HEK293 (cell line): ENCODE measurements at regions of chr12 and their contacts with region 1.

Region 1: DNA sequence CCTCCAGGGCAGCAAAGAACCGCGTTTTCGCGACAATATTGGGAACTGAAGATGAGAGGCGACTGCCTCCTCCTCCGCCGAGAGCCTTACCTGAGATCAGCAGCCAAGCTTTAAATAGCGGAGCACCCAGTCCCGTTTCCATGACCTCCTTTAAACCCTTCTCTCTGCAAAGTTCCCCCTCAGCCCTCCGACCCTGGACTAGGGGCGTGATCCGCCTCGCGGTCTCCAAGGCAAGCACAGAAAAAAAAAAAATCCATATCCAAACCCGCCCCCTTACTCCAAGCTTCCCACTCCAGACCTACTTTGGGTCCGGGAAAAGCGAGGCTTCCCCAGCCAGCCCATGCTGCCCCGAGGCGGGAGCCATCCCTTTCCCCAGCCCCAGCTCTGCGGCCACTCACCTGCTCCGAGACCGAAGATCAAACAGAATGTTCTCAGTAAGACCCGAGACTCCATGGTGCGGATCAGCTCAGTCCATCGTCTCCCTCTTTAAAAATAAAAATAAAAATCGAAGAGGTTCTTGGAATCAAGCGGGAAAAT is 630 bp downstream of the NELL2 start:
- H3K4me3 ChIP-seq: peak overlapping the region; percentile 61
- H3K27ac ChIP-seq: no peak overlapping the region; the same call in 1 of the 2 replicates
- H3K4me1 ChIP-seq: peaks cover 2% of the 10 kb centered on the region; the same call in 1 of the 2 replicates
- CTCF ChIP-seq: no peak

Region 2: GRCh38 chr12:44774815-44775411 is 100.6 kb before region 1 on chr12:
- CTCF ChIA-PET with region 1: interaction called, 10 read pairs
- POLR2A ChIA-PET with region 1: no interaction called
- H3K4me3 ChIP-seq: no peak overlapping the region
- H3K27ac ChIP-seq: no peak overlapping the region
- H3K4me1 ChIP-seq: no peaks in the 10 kb centered on the region
- CTCF ChIP-seq: no peak

Region 3: DNA sequence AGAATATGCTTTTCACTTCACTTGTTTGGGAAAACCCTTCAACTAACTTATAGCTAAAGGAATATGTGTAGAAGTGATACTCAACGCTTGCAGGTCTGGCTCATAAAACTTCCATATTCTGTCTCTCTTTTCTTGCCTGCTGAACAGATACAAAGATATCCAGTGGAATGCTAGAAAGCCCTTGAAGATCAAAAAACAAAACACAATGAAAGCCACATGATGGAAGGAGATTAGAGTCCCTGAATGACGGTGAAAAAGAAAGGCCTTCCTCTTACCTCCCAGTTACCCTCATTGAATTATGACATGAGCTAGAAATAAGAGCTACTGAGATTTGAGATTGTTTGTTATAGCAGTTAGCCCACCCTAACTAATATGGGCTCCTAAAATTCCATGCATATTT is 28.8 kb after region 1 on chr12:
- CTCF ChIA-PET with region 1: no interaction called
- POLR2A ChIA-PET with region 1: no interaction called
- H3K4me3 ChIP-seq: no peak overlapping the region
- H3K27ac ChIP-seq: no peak overlapping the region
- H3K4me1 ChIP-seq: no peaks in the 10 kb centered on the region
- CTCF ChIP-seq: no peak

Region 4: GRCh38 chr12:45010059-45010458 is 134.6 kb after region 1 on chr12:
- CTCF ChIA-PET with region 1: no interaction called
- POLR2A ChIA-PET with region 1: no interaction called
- H3K4me3 ChIP-seq: no peak overlapping the region
- H3K27ac ChIP-seq: no peak overlapping the region
- H3K4me1 ChIP-seq: no peaks in the 10 kb centered on the region
- CTCF ChIP-seq: no peak